Vagina (tissue), 2 donors: ENCODE measurements at regions of chr11 and their contacts with region 1.

Region 1: GRCh38 chr11:2305140-2305840 is 3.5 kb downstream of the TSPAN32 start:
- DNase-seq: peak in 1 of 2 donors; percentile 89
- H3K4me3 ChIP-seq: peak overlapping the region in 1 of 2 donors; percentile 10
- H3K27ac ChIP-seq: peak overlapping the region; percentile 97
- H3K4me1 ChIP-seq: peaks cover 57% of the 10 kb centered on the region
- H3K27me3 ChIP-seq: no peaks in the 10 kb centered on the region
- CTCF ChIP-seq: peak; percentile 95 to 98 (median 96)
- POLR2A ChIP-seq: no peak

Region 2: GRCh38 chr11:2196970-2197770 is 108.1 kb before region 1 on chr11:
- intact Hi-C with region 1: loop called (anchors 5 kb)
- DNase-seq: no peak
- H3K4me3 ChIP-seq: no peak overlapping the region
- H3K27ac ChIP-seq: no peak overlapping the region
- H3K4me1 ChIP-seq: no peaks in the 10 kb centered on the region
- H3K27me3 ChIP-seq: no peaks in the 10 kb centered on the region
- CTCF ChIP-seq: peak; percentile 64 to 91 (median 76)
- POLR2A ChIP-seq: no peak

Region 3: GRCh38 chr11:2399488-2400068 is 94.3 kb after region 1 on chr11:
- intact Hi-C with region 1: loop called (anchors 5 kb)
- DNase-seq: no peak
- H3K4me3 ChIP-seq: peak overlapping the region; percentile 82 to 87
- H3K27ac ChIP-seq: peak overlapping the region; percentile 96
- H3K4me1 ChIP-seq: peaks cover 37% of the 10 kb centered on the region
- H3K27me3 ChIP-seq: no peaks in the 10 kb centered on the region
- CTCF ChIP-seq: no peak
- POLR2A ChIP-seq: no peak

Region 4: DNA sequence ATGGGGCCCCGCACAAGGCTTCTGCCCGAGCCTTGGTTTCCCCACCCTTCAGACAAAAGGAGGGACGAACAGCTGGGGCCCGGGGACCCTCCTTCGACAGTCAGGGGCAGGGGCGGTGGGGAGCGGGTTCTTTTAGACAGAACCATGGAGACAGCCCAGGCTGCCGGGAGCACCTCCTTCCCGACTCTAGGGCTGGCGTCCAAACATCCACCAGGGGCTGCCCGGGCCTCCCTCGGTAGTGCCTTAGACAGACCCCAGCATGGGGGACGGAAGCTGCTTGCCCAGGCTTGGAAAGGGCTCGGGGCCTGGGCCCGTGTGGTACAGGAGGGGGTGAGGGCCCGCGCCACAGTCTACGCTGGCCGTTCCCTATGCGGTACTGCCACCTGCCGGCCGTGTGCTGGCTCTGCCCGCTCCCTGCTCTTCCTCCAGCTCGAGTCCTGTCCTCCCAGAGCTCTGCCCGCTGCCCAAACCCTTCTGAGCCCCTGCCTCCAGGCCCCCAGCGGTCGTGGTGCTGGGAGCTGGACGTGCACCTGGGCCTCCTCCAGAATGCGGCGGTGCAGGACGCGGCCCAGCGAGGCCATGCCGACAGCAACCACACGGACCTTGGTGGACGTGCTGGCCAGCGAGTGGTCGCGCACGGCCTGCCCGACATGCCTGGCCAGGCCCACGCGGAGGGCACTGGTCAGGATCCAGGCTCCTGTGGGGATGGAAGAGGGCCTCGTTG is 115.4 kb after region 1 on chr11:
- intact Hi-C with region 1: loop called (anchors 2 kb)
- DNase-seq: no peak
- H3K4me3 ChIP-seq: no peak overlapping the region
- H3K27ac ChIP-seq: no peak overlapping the region
- H3K4me1 ChIP-seq: peaks cover 15% of the 10 kb centered on the region
- H3K27me3 ChIP-seq: no peaks in the 10 kb centered on the region
- CTCF ChIP-seq: peak; percentile 92 to 98 (median 95)
- POLR2A ChIP-seq: no peak

Region 5: DNA sequence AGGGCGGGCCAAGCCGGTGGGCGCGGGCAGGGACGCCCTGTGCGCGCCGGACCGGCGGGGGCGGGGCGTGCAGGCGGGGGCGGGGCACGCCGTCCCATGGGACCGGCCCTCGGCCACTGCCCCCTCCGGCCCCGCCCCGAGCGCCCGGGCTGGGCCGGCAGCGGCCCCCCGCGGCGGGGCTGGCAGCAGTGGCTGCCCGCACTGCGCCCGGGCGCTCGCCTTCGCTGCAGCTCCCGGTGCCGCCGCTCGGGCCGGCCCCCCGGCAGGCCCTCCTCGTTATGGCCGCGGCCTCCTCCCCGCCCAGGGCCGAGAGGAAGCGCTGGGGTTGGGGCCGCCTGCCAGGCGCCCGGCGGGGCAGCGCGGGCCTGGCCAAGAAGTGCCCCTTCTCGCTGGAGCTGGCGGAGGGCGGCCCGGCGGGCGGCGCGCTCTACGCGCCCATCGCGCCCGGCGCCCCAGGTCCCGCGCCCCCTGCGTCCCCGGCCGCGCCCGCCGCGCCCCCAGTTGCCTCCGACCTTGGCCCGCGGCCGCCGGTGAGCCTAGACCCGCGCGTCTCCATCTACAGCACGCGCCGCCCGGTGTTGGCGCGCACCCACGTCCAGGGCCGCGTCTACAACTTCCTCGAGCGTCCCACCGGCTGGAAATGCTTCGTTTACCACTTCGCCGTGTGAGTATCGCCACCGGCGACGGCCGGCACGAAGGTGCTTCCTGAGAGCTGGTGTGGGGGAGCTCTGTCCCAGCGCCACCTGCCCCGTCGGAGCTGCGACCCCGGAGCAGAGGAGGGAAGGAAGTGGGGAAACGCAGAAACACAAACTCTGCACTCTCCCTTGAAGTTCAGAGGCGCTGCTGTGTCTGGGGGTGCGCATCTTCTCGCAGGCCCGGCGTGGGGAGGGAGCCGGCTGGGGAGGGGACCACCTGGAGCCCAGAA is 139.8 kb after region 1 on chr11 and contains the start of gene KCNQ1:
- intact Hi-C with region 1: no loop called
- DNase-seq: no peak
- H3K4me3 ChIP-seq: peak within 1 kb of the TSS; percentile 29 to 50
- H3K27ac ChIP-seq: no peak within 1 kb of the TSS
- H3K4me1 ChIP-seq: peaks cover 17% of the 10 kb centered on the region
- H3K27me3 ChIP-seq: peaks cover 8% of the 10 kb centered on the region
- CTCF ChIP-seq: no peak
- POLR2A ChIP-seq: no peak
- total RNA-seq, gene KCNQ1: 2.7 TPM

Region 6: GRCh38 chr11:2666401-2666741 is 361.1 kb after region 1 on chr11:
- intact Hi-C with region 1: no loop called
- DNase-seq: peak in 1 of 2 donors; percentile 69
- H3K4me3 ChIP-seq: no peak overlapping the region
- H3K27ac ChIP-seq: no peak overlapping the region
- H3K4me1 ChIP-seq: no peaks in the 10 kb centered on the region
- H3K27me3 ChIP-seq: no peaks in the 10 kb centered on the region
- CTCF ChIP-seq: no peak
- POLR2A ChIP-seq: no peak

Region 7: GRCh38 chr11:2892215-2893020 is 587.1 kb after region 1 on chr11:
- intact Hi-C with region 1: loop called (anchors 10 kb)
- DNase-seq: no peak
- H3K4me3 ChIP-seq: peak overlapping the region; percentile 43 to 48
- H3K27ac ChIP-seq: peak overlapping the region; percentile 82
- H3K4me1 ChIP-seq: peaks cover 30% of the 10 kb centered on the region
- H3K27me3 ChIP-seq: no peaks in the 10 kb centered on the region
- CTCF ChIP-seq: peak; percentile 83 to 99 (median 96)
- POLR2A ChIP-seq: no peak